HEK293T (cell line): ENCODE measurements at regions of chr15 and their contacts with region 1.

Region 1: GRCh38 chr15:65054333-65055200 is 9.4 kb downstream of the SLC51B start:
- DNase-seq: peak; percentile 72

Region 2: GRCh38 chr15:65069179-65069578 is 14.6 kb after region 1 on chr15:
- CTCF ChIA-PET with region 1: no interaction called
- POLR2A ChIA-PET with region 1: no interaction called
- DNase-seq: no peak

Region 3: GRCh38 chr15:65086017-65086679 is 31.6 kb after region 1 on chr15:
- CTCF ChIA-PET with region 1: interaction called, 15 read pairs
- POLR2A ChIA-PET with region 1: interaction called, 4 read pairs
- DNase-seq: peak; percentile 26